ENCODE measurements at regions of chr3 and their contacts with region 1.

Region 1: GRCh38 chr3:56347219-56347871 is 120.9 kb downstream of the ERC2 start:
- DNase-seq: peak; percentile 78
- H3K4me3 Mint-ChIP-seq: no peak overlapping the region
- H3K27ac Mint-ChIP-seq: no peak overlapping the region
- H3K4me1 Mint-ChIP-seq: no peaks in the 10 kb centered on the region
- H3K27me3 Mint-ChIP-seq: no peaks in the 10 kb centered on the region

Region 2: DNA sequence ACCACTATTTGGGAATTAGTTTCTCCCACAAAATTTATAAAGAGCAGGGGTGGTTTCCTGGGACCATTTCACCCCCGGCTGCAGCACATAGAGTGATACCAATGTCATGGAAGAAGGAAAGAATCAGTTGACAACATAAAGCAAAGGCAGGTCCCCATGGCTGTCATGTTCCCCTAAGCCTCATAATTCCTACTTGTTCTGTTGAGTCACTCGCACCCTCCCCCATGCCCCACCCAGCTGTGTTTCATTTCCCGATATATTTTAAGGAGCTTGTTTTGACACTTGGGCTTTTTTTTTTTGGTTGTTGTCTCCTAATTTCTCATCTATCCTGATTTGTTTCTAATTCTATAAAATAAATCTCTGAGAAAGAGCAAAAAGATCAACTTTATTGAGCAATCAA is 96.0 kb after region 1 on chr3:
- intact Hi-C with region 1: loop called (anchors 2 kb)
- DNase-seq: no peak
- H3K4me3 Mint-ChIP-seq: no peak overlapping the region
- H3K27ac Mint-ChIP-seq: no peak overlapping the region
- H3K4me1 Mint-ChIP-seq: no peaks in the 10 kb centered on the region
- H3K27me3 Mint-ChIP-seq: no peaks in the 10 kb centered on the region

Region 3: DNA sequence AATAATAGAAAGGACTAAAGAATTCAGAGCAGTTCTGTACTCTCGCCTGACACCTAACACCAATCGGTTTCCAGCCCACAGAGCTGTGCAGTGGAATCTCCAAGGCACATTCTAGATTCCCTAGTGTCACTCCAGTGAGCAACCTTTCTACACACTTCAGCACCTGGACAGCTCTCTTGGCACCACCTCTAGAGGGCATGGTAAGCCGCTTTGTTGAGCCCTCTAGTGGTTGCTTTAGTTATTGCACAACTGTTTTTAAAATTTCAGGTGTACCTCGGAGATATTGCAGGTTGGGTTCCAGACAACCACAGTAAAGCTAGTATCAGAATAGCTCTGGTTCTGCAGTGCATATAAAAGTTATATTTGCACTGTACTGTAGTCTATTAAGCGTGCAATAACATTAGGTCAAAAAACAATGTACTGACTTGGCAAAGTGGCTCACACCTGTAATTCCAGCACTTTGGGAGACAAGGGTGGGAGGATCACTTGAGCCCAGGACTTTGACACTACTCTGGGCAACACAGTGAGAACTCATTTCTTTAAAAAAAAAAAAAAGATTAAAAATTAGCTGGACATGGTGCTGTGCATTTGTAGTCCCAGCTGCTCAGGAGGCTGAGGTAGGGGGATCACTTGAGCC is 147.5 kb after region 1 on chr3:
- intact Hi-C with region 1: no loop called
- DNase-seq: peak; percentile 92
- H3K4me3 Mint-ChIP-seq: no peak overlapping the region
- H3K27ac Mint-ChIP-seq: no peak overlapping the region
- H3K4me1 Mint-ChIP-seq: peaks cover 1% of the 10 kb centered on the region
- H3K27me3 Mint-ChIP-seq: no peaks in the 10 kb centered on the region